ENCODE measurements at regions of chr11 and their contacts with region 1.

Region 1: GRCh38 chr11:73307323-73308002 is 613 bp upstream of the ARHGEF17 start:
- DNase-seq: peak; percentile 96
- H3K4me3 Mint-ChIP-seq: peak overlapping the region; percentile 89
- H3K27ac Mint-ChIP-seq: peak overlapping the region; percentile 59
- H3K4me1 Mint-ChIP-seq: peaks cover 9% of the 10 kb centered on the region
- H3K27me3 Mint-ChIP-seq: peaks cover 43% of the 10 kb centered on the region

Region 2: DNA sequence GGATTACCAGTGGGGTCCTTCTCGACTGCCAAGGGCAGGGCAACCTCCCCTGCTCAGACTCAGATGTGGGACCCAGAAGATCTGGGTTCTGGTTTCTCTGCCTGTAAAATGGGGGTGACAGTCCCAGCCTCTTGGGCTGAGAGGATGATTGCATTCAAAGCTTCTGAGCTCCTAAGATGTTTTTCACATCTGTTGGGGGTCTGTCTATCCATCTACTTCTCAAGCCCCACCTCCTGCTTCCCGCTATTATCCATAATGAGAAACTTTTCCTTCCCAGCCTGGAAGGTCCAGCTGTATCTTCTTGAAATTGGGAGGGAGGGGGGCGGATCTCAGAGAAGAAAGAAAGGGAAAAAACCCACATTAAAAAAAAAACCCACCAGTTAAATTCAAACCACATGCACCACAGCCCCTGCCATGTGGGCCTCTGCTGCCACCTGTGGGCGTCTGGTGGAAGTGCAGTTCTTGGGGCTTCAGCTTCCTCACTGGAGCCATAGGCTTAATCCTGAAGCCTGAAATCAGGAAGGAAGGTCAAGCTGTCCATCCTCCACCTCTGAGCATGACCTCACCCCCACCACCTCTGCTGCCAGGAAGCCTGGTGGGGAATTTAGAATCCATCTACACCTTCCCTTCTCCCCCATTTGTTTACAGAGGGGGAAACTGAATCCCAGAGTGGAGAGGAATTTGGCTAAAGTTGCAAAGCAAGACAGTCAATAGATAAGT is 27.9 kb after region 1 on chr11:
- intact Hi-C with region 1: loop called (anchors 1 kb)
- DNase-seq: peak; percentile 93
- H3K4me3 Mint-ChIP-seq: no peak overlapping the region
- H3K27ac Mint-ChIP-seq: no peak overlapping the region
- H3K4me1 Mint-ChIP-seq: no peaks in the 10 kb centered on the region
- H3K27me3 Mint-ChIP-seq: peaks cover 6% of the 10 kb centered on the region

Region 3: GRCh38 chr11:73376160-73376802 is 68.8 kb after region 1 on chr11 and contains the start of gene RELT:
- intact Hi-C with region 1: loop called (anchors 5 kb)
- DNase-seq: peak; percentile 99
- H3K4me3 Mint-ChIP-seq: peak within 1 kb of the TSS; percentile 94
- H3K27ac Mint-ChIP-seq: peak within 1 kb of the TSS; percentile 95
- H3K4me1 Mint-ChIP-seq: peaks cover 35% of the 10 kb centered on the region
- H3K27me3 Mint-ChIP-seq: no peaks in the 10 kb centered on the region
- total RNA-seq, gene RELT: 35.0 and 38.5 TPM in 2 replicates

Region 4: GRCh38 chr11:74492974-74493790 is 1185.7 kb after region 1 on chr11 and contains the start of gene LIPT2:
- intact Hi-C with region 1: loop called (anchors 5 kb)
- DNase-seq: peak; percentile 99
- H3K4me3 Mint-ChIP-seq: peak within 1 kb of the TSS; percentile 86
- H3K27ac Mint-ChIP-seq: peak within 1 kb of the TSS; percentile 80
- H3K4me1 Mint-ChIP-seq: peaks cover 15% of the 10 kb centered on the region
- H3K27me3 Mint-ChIP-seq: peaks cover 1% of the 10 kb centered on the region
- total RNA-seq, gene LIPT2: 3.1 and 4.7 TPM in 2 replicates